ENCODE measurements at regions of chr1 and their contacts with region 1.

Region 1: DNA sequence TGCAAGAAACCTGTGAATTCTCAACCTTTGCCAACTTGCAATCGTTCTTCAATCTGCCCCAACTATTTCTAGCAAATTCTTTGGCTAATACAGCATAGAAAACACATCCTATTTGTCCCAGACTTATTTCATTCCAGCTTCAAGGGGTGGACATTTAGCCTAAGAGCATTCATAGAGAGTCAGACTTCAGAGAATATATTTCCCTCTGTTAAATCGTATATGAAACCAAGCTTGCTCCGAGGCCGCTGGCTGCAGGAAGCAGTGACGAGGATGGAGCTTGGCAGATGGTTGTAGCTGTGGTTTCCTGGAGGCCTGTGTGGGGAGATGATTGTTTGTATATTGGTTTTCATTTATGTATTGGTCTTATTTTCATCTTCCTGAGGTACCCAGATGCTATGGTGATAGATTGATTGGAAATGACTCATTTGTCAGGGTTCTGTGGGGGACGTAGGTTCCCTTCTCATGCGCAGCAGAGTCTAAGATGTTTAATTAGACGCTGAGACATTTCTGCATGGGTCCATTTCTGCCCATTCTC is 26.1 kb downstream of the MAN1C1 start:
- DNase-seq: peak; percentile 91
- ATAC-seq: peak; percentile 92
- H3K4me3 Mint-ChIP-seq: peak overlapping the region; percentile 56
- H3K27ac Mint-ChIP-seq: peak overlapping the region; percentile 85
- H3K4me1 Mint-ChIP-seq: peaks cover 60% of the 10 kb centered on the region
- H3K27me3 Mint-ChIP-seq: peaks cover 36% of the 10 kb centered on the region

Region 2: GRCh38 chr1:25624156-25624555 is 18.5 kb before region 1 on chr1:
- CTCF ChIA-PET with region 1: interaction called, 63 read pairs
- POLR2A ChIA-PET with region 1: interaction called, 4 read pairs
- DNase-seq: peak; percentile 76
- ATAC-seq: peak; percentile 31
- H3K4me3 Mint-ChIP-seq: peak overlapping the region; percentile 12
- H3K27ac Mint-ChIP-seq: peak overlapping the region; percentile 48
- H3K4me1 Mint-ChIP-seq: peaks cover 69% of the 10 kb centered on the region
- H3K27me3 Mint-ChIP-seq: peaks cover 6% of the 10 kb centered on the region

Region 3: DNA sequence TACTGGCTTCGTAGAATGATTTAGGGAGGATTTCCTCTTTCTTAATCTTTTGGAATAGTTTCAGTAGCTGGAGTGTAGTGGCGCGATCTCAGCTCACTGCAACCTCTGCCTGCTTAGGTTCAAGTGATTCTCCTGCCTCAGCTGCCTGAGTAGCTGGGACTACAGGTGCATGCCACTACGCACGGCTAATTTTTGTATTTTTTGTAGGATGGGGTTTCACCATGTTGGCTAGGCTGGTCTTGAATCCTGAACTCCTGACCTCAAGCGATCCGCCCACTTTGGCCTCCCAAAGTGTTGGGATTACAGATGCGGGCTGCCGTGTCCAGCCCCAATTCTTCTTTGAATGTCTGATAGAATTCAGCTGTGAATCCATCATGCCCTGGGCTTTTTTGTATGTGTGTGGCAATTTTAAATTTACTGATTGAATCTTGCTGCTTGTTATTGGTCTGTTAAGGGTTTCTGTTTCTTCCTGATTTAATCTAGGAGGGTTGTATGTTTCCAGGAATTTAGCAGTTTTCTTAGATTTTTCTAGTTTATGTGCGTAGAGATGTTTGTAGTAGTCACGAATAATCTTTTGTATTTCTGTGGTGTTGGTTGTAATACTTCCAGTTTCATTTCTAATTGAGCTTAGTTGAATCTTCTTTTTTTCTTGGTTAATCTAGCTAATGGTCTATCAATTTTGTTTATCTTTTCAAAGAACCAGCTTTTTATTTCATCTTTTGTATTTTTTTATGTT is 10.7 kb before region 1 on chr1:
- CTCF ChIA-PET with region 1: interaction called, 10 read pairs
- POLR2A ChIA-PET with region 1: interaction called, 3 read pairs
- DNase-seq: peak; percentile 17
- ATAC-seq: peak; percentile 65
- H3K4me3 Mint-ChIP-seq: peak overlapping the region; percentile 77
- H3K27ac Mint-ChIP-seq: peak overlapping the region; percentile 91
- H3K4me1 Mint-ChIP-seq: peaks cover 62% of the 10 kb centered on the region
- H3K27me3 Mint-ChIP-seq: no peaks in the 10 kb centered on the region

Region 4: DNA sequence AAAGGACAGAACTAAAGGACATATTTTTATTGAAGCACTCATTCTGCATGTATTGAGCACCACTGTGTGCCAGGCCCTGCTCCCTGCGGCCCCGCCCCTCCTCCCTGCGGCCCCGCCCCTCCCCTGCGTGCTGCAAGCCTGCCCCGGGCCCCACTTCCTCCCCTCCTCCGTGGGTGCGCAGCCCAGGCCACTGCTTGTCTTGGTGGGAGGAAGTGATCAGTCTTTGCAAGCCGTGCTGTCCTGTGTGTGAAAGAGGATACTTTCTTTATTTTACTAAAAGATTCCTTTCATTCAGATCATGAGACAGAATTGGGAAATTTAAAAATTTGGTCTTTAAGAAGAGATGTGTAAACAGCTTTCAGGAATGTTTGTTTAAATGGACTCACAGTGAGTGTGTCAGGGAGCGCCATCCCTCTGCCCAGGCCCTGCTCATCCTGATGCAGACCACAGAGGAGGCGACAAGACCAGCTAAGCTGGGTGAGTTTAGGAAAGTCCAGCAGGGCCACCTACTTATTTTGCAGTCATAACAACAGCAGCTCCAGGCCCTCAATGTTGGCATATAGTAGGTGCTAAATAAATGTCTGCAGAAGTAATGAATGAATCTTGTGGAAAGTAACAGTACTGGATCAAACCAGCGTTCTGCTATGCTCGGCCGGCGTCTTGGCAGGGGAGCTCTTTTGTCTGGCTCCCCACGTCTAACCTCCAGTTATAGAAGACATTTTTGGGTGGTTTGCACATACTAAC is 69.1 kb after region 1 on chr1:
- CTCF ChIA-PET with region 1: no interaction called
- POLR2A ChIA-PET with region 1: no interaction called
- DNase-seq: peak; percentile 68
- ATAC-seq: peak; percentile 92
- H3K4me3 Mint-ChIP-seq: peak overlapping the region; percentile 22
- H3K27ac Mint-ChIP-seq: peak overlapping the region; percentile 35
- H3K4me1 Mint-ChIP-seq: peaks cover 35% of the 10 kb centered on the region
- H3K27me3 Mint-ChIP-seq: peaks cover 5% of the 10 kb centered on the region

Measured in activated CD8-positive, alpha-beta T cell treated with anti-CD3 and anti-CD28 coated beads, Interleukin-2, amount 10 ng/mL, durations not matched to agents 7 days and 5 days (primary cell).